Activated T-helper 1 cell treated with anti-CD3 and anti-CD28 coated beads, Interleukin-12 subunit alpha, Interleukin-12 subunit beta, Interleukin-2, Interleukin-4 antibody, amounts not matched to agents 30 ng/mL and 10 ng/mL and 1 ng/mL, durations not matched to agents 14 hours and 24 hours and 36 hours (primary cell): ENCODE measurements at regions of chr4 and their contacts with region 1.

Region 1: DNA sequence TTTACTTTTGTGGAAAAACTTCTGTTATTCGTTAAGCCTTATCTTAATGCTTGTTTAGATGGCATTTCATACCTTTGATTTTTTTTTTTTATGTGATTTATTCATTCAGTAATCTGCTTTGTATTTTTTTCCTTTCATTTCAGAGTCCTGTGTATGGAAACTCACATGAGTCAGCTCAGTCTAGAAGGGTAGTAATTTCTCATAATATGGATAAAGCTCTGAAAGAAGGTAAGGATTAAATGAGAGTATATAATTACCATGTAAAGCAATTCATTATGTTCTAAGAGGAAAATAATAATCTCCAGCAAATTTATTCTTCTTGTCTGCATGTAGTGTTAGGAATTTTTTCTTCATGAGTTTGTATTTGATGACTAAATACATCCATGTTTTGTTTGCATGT is 37.8 kb downstream of the SNX25 start:
- DNase-seq: no peak
- H3K4me3 Mint-ChIP-seq: no peak overlapping the region
- H3K27ac Mint-ChIP-seq: peak overlapping the region; percentile 15
- H3K4me1 Mint-ChIP-seq: peaks cover 41% of the 10 kb centered on the region
- H3K27me3 Mint-ChIP-seq: no peaks in the 10 kb centered on the region

Region 2: DNA sequence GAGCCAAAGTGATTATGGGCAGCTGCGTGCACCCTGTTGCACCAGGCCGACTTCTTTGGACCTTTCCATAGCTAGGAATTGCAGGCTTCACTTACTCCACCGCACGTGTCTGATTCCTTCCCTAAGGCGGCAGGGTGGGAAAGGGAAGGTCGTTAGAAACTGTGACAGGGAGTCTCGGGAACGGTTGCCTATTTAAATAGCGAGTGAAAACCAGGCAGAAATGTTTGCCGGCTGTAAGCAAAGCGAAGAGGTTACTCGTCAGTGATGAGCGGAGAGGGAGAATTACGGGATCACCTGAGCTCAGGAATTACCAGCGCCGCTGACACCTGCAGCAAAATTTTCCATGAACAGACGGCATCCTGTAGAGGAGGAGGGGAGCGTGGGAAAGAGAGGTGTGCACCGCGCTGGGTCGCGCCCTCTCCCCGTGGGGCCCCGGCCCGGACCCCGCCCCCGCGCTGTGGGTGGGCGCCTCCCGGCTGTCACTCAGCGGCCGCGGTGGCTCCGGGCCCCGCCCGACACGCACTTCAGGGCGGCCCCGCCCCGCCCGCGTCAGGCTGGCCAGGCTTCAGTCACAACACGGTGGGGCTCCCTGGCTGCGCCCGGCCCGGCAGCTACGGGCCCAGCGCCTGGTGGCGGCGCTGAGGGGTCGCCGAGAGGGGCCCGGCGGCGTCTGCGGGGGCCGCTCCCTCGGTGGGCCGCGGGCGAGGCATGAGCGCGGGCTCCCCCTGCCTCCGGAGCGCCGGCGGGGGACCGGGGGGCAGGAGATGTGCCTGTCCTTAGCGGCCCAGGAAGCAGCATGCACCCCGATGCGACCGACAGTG is 37.9 kb before region 1 on chr4 and contains the start of gene SNX25:
- intact Hi-C with region 1: loop called (anchors 2 kb)
- DNase-seq: peak; percentile 86
- H3K4me3 Mint-ChIP-seq: peak within 1 kb of the TSS; percentile 92
- H3K27ac Mint-ChIP-seq: peak within 1 kb of the TSS; percentile 86
- H3K4me1 Mint-ChIP-seq: peaks cover 38% of the 10 kb centered on the region
- H3K27me3 Mint-ChIP-seq: peaks cover 4% of the 10 kb centered on the region
- total RNA-seq, gene SNX25: 22.9 and 25.3 TPM in 2 replicates

Region 3: GRCh38 chr4:185343726-185344581 is 96.8 kb after region 1 on chr4:
- intact Hi-C with region 1: loop called (anchors 2 kb)
- DNase-seq: no peak
- H3K4me3 Mint-ChIP-seq: peak overlapping the region; percentile 51
- H3K27ac Mint-ChIP-seq: peak overlapping the region; percentile 89
- H3K4me1 Mint-ChIP-seq: peaks cover 68% of the 10 kb centered on the region
- H3K27me3 Mint-ChIP-seq: no peaks in the 10 kb centered on the region